Posterior vena cava (tissue), 2 donors: ENCODE measurements at regions of chr5 and their contacts with region 1.

Region 1: DNA sequence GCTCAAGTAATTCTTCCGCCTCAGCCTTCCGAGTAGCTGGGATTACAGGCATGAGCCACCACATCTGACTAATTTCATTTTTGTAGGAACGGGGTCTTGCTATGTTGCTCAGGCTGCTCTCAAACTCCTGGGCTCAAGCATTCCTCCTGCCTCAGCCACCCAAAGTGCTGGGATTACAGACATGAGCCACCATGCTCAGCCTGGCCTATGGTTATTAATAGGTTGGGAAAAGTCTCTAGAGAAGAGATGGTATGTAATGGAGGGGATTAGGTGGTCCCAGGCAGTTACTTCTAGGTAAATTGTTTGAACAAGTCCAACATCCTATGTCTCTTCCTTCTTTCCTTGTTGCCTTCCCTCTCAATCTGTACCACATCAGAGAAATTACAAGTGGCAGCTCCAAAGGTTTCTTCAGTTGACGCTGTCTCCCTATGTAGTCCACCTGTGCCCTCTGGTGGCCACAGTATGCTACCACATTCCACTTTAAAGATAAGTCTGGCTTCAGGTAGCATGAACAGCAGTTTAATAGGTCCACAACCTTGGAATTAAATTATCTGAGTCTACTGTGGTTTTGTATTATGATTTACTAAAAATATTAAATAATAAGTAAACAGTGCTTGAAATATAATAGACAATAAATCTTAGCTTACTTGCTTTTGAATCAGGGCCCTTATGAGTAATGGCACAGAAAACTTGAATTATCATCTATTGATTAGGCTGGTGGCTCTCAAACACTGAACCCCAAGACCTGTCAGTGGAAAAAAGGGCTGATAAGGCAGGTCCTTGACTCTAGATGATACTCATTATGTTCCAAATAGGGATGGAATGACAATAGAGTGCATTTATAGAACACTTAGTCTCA is 9.7 kb downstream of the TIGD6 start:
- DNase-seq: no peak

Region 2: DNA sequence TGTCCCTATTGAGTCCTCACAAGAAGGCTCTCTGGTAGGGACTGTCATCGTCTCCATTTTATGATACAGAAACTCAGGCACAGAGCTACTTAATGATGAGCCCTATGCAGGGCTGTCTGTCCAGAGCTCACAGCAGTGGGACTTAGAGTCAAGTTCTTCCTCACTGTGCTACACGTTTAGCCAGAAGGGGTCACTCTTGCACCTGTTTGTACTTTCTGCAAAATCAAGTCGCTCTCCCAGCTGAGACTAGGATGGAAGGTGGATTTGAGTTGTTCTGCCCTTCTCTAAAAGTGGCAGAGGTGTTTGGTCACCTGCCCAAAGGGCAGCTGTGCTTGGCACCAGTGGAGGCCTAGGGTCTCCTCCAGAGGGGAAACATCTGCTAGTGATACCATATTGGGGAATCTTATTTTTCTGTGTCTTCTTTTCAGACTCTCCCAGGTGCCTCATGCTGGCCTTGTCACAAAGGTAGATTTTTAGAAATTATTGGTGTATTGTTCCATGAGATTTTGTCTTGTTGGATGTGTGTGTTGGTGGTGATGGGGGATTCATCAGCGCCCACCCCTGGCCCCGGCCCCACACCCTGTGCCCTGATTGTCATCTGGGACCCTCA is 156.4 kb before region 1 on chr5:
- intact Hi-C with region 1: loop called (anchors 5 to 10 kb)
- DNase-seq: peak; percentile 54